ENCODE measurements at regions of chr5 and their contacts with region 1.

Region 1: GRCh38 chr5:126676195-126676624 is 75.5 kb downstream of the PHAX start:
- DNase-seq: peak; percentile 34 to 84 (median 62)
- ATAC-seq: peak; percentile 97
- H3K4me3 ChIP-seq: no peak overlapping the region
- H3K4me3 Mint-ChIP-seq: no peak overlapping the region
- H3K27ac ChIP-seq: no peak overlapping the region
- H3K27ac Mint-ChIP-seq: no peak overlapping the region
- H3K4me1 ChIP-seq: no peaks in the 10 kb centered on the region
- H3K4me1 Mint-ChIP-seq: peaks cover 3% of the 10 kb centered on the region
- H3K27me3 ChIP-seq: no peaks in the 10 kb centered on the region
- H3K27me3 Mint-ChIP-seq: no peaks in the 10 kb centered on the region
- CTCF ChIP-seq: peak; percentile 85

Region 2: GRCh38 chr5:124841829-124842712 is 1834.1 kb before region 1 on chr5:
- CTCF ChIA-PET with region 1: no interaction called
- POLR2A ChIA-PET with region 1: no interaction called
- intact Hi-C with region 1: no loop called
- DNase-seq: no peak
- ATAC-seq: no peak
- H3K4me3 ChIP-seq: no peak overlapping the region
- H3K4me3 Mint-ChIP-seq: no peak overlapping the region
- H3K27ac ChIP-seq: no peak overlapping the region
- H3K27ac Mint-ChIP-seq: no peak overlapping the region
- H3K4me1 ChIP-seq: no peaks in the 10 kb centered on the region
- H3K4me1 Mint-ChIP-seq: no peaks in the 10 kb centered on the region
- H3K27me3 ChIP-seq: no peaks in the 10 kb centered on the region
- H3K27me3 Mint-ChIP-seq: no peaks in the 10 kb centered on the region
- CTCF ChIP-seq: no peak

Region 3: DNA sequence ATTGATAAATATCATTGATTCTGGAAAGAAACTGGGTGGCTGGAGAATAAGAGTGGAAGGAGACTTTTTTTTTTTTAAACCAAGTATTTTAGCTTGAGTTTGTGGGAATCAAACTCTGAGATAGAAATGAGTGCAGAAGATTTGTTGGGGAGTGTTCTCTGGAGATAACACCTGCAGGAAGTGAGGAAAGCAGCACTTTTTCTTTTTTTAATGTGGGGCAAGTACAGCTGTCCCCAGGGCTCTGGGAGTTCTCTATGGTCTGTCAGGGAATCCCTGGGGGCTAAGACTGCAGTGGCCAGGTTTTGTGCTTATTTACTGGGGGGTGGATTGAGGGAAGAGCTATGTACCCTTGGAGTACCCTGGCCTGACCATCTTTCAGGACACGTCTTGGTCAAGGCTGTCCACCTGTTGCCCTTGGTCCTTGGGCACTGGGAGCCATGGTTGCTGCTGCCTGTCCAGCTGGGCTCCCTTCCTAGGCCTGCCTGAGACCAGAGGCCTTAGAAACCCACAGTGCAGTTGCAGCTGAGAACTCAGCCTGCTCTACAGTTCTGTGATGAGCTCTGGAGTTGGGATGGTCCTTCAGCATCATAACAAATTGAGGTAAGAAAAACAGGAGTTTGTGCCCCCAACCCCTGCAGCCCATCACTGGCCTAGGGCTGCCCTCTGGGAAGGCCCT is 10.4 kb after region 1 on chr5:
- CTCF ChIA-PET with region 1: interaction called, 28 read pairs
- POLR2A ChIA-PET with region 1: no interaction called
- intact Hi-C with region 1: no loop called
- DNase-seq: no peak
- ATAC-seq: no peak
- H3K4me3 ChIP-seq: no peak overlapping the region
- H3K4me3 Mint-ChIP-seq: no peak overlapping the region
- H3K27ac ChIP-seq: no peak overlapping the region
- H3K27ac Mint-ChIP-seq: no peak overlapping the region
- H3K4me1 ChIP-seq: no peaks in the 10 kb centered on the region
- H3K4me1 Mint-ChIP-seq: peaks cover 6% of the 10 kb centered on the region
- H3K27me3 ChIP-seq: no peaks in the 10 kb centered on the region
- H3K27me3 Mint-ChIP-seq: peaks cover 2% of the 10 kb centered on the region
- CTCF ChIP-seq: no peak

Region 4: GRCh38 chr5:126801992-126802294 is 125.7 kb after region 1 on chr5:
- CTCF ChIA-PET with region 1: interaction called, 27 read pairs
- POLR2A ChIA-PET with region 1: interaction called, 3 read pairs
- intact Hi-C with region 1: loop called (anchors 1 to 2 kb)
- DNase-seq: peak in 2 of 9 experiments; percentile 39 to 54
- ATAC-seq: peak; percentile 62
- H3K4me3 ChIP-seq: no peak overlapping the region
- H3K4me3 Mint-ChIP-seq: no peak overlapping the region
- H3K27ac ChIP-seq: no peak overlapping the region
- H3K27ac Mint-ChIP-seq: no peak overlapping the region
- H3K4me1 ChIP-seq: no peaks in the 10 kb centered on the region
- H3K4me1 Mint-ChIP-seq: peaks cover 33% of the 10 kb centered on the region
- H3K27me3 ChIP-seq: no peaks in the 10 kb centered on the region
- H3K27me3 Mint-ChIP-seq: no peaks in the 10 kb centered on the region
- CTCF ChIP-seq: peak; percentile 36

Region 5: GRCh38 chr5:127040796-127041520 is 364.7 kb after region 1 on chr5:
- CTCF ChIA-PET with region 1: no interaction called
- POLR2A ChIA-PET with region 1: no interaction called
- intact Hi-C with region 1: loop called (anchors 2 to 10 kb)
- DNase-seq: no peak
- ATAC-seq: no peak
- H3K4me3 ChIP-seq: no peak overlapping the region
- H3K4me3 Mint-ChIP-seq: no peak overlapping the region
- H3K27ac ChIP-seq: no peak overlapping the region
- H3K27ac Mint-ChIP-seq: no peak overlapping the region
- H3K4me1 ChIP-seq: no peaks in the 10 kb centered on the region
- H3K4me1 Mint-ChIP-seq: no peaks in the 10 kb centered on the region
- H3K27me3 ChIP-seq: no peaks in the 10 kb centered on the region
- H3K27me3 Mint-ChIP-seq: no peaks in the 10 kb centered on the region
- CTCF ChIP-seq: no peak

Region 6: GRCh38 chr5:127492854-127493738 is 816.9 kb after region 1 on chr5:
- CTCF ChIA-PET with region 1: interaction called, 3 read pairs
- POLR2A ChIA-PET with region 1: no interaction called
- intact Hi-C with region 1: loop called (anchors 5 kb)
- DNase-seq: peak in 2 of 9 experiments; percentile 40 to 54
- ATAC-seq: peak; percentile 71
- H3K4me3 ChIP-seq: no peak overlapping the region
- H3K4me3 Mint-ChIP-seq: no peak overlapping the region
- H3K27ac ChIP-seq: no peak overlapping the region
- H3K27ac Mint-ChIP-seq: no peak overlapping the region
- H3K4me1 ChIP-seq: no peaks in the 10 kb centered on the region
- H3K4me1 Mint-ChIP-seq: no peaks in the 10 kb centered on the region
- H3K27me3 ChIP-seq: no peaks in the 10 kb centered on the region
- H3K27me3 Mint-ChIP-seq: peaks cover 27% of the 10 kb centered on the region
- CTCF ChIP-seq: peak; percentile 94